ENCODE measurements at regions of chr11 and their contacts with region 1.

Region 1: GRCh38 chr11:128180446-128181087 is 406.8 kb downstream of the ETS1 start:
- DNase-seq: no peak
- H3K4me3 ChIP-seq: no peak overlapping the region
- H3K27ac ChIP-seq: no peak overlapping the region
- H3K4me1 ChIP-seq: peaks cover 4% of the 10 kb centered on the region
- H3K27me3 ChIP-seq: no peaks in the 10 kb centered on the region
- CTCF ChIP-seq: no peak
- EP300 ChIP-seq: no peak
- POLR2A ChIP-seq: no peak

Region 2: GRCh38 chr11:128365044-128365443 is 184.5 kb after region 1 on chr11:
- intact Hi-C with region 1: no loop called
- DNase-seq: no peak
- H3K4me3 ChIP-seq: no peak overlapping the region
- H3K27ac ChIP-seq: no peak overlapping the region
- H3K4me1 ChIP-seq: no peaks in the 10 kb centered on the region
- H3K27me3 ChIP-seq: no peaks in the 10 kb centered on the region
- CTCF ChIP-seq: no peak
- EP300 ChIP-seq: no peak
- POLR2A ChIP-seq: no peak

Region 3: DNA sequence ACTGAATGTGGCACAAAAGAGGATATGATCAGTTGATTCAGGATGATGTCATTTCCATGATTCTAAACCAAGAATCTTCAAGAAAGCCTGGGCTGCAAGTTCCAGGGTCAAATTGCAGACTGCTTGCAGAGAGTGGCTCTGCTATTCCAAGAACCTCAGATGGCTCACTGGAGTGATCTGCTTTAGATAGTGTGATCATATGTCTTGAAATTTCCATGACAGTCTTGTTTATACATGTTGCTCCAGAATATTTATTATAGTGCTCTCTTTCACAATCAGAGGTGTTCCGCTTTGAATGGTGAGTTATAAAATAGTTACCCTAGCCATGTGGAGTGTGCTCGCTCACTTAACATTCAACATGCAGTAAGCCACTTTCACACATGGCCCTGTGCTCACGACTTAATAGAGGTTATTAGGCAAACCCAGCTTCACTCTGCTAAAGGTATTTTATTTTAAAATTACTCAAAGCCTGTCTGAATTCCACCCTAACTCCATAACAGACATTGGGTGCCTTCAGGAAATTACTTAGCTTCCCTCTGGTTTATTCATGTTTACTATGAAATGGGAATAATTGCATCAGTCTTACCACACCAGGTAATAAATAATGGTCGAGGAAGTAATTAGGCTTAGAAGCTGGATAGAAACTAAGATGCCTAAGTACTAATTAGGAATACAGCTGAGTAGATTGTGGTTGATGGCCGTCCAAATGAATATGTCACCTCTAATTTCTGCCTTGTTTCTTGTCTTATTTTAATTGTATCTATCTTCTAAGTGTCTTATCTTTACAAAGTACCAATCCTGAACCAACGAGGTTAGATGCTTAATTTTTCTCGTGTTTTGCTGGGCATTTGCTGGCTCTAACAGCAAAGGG is 218.9 kb after region 1 on chr11:
- intact Hi-C with region 1: loop called in 1 of 4 experiments (anchors 10 kb)
- DNase-seq: no peak
- H3K4me3 ChIP-seq: no peak overlapping the region
- H3K27ac ChIP-seq: no peak overlapping the region
- H3K4me1 ChIP-seq: peaks cover 2% of the 10 kb centered on the region
- H3K27me3 ChIP-seq: no peaks in the 10 kb centered on the region
- CTCF ChIP-seq: no peak
- EP300 ChIP-seq: no peak
- POLR2A ChIP-seq: no peak